ENCODE measurements at regions of chr2 and their contacts with region 1.

Region 1: DNA sequence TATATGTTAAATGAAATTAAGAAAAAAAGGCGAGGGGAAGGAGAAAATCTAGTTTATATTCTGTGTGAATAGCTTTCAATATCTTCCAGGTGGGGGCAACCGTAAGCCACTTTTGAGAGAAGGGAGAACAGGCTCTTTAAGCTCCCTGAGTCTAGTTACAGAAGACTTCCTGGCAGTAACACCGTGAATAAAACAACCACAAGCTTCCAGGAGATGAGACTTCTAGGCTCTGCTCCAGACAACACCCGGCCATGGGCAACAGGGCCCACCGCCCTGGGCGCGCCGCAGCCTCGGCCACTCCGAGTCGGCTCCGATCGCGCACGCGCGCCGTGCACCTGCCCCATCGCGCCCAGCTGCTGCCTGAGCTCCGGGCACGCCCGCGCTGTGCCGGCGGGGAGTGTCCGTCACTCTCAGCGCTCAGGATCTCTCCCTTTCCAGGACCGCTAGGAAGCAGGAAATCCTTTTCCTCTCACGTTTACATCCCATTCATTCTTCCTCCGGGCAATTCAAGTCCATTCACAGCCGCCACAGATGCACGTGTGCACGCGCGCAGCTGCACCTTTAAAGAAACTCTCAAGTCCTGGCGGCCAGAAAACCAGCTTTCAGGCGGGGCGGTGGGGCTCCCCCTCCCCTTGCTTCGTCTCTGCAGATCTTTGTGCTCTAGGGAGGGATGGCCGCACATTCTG is 19.4 kb upstream of the PAX3 start:
- DNase-seq: peak; percentile 58
- H3K4me3 Mint-ChIP-seq: peak overlapping the region; percentile 74
- H3K27ac Mint-ChIP-seq: no peak overlapping the region
- H3K4me1 Mint-ChIP-seq: peaks cover 6% of the 10 kb centered on the region
- H3K27me3 Mint-ChIP-seq: peaks cover 66% of the 10 kb centered on the region

Region 2: GRCh38 chr2:222483513-222484039 is 165.4 kb after region 1 on chr2:
- CTCF ChIA-PET with region 1: interaction called, 4 read pairs
- intact Hi-C with region 1: loop called (anchors 1 kb)
- DNase-seq: peak; percentile 30
- H3K4me3 Mint-ChIP-seq: no peak overlapping the region
- H3K27ac Mint-ChIP-seq: no peak overlapping the region
- H3K4me1 Mint-ChIP-seq: peaks cover 2% of the 10 kb centered on the region
- H3K27me3 Mint-ChIP-seq: peaks cover 15% of the 10 kb centered on the region

Region 3: DNA sequence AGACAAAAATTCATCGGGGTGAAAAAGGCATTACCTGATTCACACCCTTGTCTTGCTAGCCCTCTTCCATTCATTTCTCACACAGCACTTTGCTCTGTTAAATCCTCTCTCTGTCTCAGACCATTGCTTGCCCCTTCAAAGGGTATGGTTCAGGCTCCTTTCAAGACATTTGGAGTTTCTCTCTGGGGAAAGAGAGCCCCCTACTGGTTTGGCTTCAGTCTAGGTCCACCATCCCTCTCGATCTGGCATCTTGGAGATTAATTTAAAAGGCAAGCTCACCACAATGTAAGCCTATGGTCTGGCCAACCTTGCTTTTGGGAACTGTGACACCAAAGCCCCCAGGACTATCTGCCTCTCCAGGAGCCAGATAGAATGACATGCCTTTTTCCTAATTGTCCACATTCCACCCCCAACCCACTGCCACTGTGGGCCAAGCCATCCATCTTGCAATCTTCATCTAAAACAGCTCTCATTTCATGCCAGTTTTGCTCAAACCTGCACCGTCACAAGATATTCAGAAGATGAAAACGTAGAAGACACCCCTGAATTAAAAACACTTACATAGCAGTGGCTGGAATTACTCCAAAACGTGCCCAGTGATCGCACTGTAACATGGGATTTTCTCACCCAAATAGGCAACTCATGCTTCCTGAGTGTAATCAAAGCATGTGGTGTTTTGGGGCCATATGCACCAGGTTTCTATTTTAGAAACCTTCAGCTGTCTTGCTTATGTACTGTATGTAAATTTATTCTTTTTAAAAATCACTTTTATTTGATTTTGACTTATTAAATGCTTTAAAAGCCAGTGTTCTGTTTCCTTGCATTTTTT is 243.9 kb after region 1 on chr2:
- CTCF ChIA-PET with region 1: interaction called, 23 read pairs
- intact Hi-C with region 1: loop called (anchors 1 kb)
- DNase-seq: peak; percentile 62
- H3K4me3 Mint-ChIP-seq: no peak overlapping the region
- H3K27ac Mint-ChIP-seq: no peak overlapping the region
- H3K4me1 Mint-ChIP-seq: no peaks in the 10 kb centered on the region
- H3K27me3 Mint-ChIP-seq: no peaks in the 10 kb centered on the region

Region 4: GRCh38 chr2:222613715-222614331 is 295.7 kb after region 1 on chr2:
- CTCF ChIA-PET with region 1: interaction called, 4 read pairs
- intact Hi-C with region 1: loop called (anchors 1 kb)
- DNase-seq: no peak
- H3K4me3 Mint-ChIP-seq: no peak overlapping the region
- H3K27ac Mint-ChIP-seq: no peak overlapping the region
- H3K4me1 Mint-ChIP-seq: no peaks in the 10 kb centered on the region
- H3K27me3 Mint-ChIP-seq: no peaks in the 10 kb centered on the region

Measured in activated naive CD4-positive, alpha-beta T cell treated with anti-CD3 and anti-CD28 coated beads for 36 hours (primary cell).